Activated CD8-positive, alpha-beta T cell treated with anti-CD3 and anti-CD28 coated beads for 36 hours (primary cell): ENCODE measurements at regions of chr19 and their contacts with region 1.

Region 1: DNA sequence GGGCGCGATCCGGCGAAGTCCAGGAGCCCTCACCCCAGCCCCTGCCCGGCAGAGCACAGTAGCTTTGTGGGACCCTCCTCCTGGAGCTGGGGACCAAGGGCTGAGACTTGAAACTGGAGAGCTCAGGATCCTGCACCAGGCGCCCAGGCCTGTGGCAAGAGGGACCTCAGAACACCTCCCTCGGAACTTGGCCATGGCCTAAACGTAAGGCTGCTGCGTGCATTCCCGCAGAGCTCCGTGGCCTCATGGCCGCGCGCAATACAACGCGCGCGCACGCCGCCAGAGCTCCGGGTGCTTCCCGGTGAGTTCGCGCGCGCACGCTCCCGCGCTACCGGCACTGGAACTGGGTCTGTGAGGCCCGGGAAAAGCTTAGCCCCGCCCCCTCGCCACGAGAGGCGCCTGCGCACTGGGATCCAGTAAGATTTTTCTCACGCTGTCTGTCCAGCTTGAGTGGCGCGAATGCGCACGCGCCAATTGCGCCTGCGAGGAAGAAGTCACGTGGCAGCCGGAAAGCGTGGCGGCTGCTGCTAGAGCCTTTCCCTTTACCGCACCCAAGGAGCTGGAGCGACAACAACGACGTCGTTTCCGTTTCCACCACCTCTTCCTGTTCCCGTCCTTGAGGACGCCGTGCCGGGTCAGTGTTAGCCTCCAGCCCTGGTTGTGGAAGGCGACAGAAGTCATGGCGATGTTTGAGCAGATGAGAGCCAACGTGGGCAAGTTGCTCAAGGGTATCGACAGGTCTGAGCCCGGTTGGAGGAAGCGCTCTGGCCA is at the start of gene EIF3K:
- DNase-seq: peak; percentile 99
- ATAC-seq: peak; percentile 74
- H3K4me3 Mint-ChIP-seq: peak within 1 kb of the TSS; percentile 99
- H3K27ac Mint-ChIP-seq: peak within 1 kb of the TSS; percentile 99
- H3K4me1 Mint-ChIP-seq: peaks cover 44% of the 10 kb centered on the region
- H3K27me3 Mint-ChIP-seq: no peaks in the 10 kb centered on the region
- CTCF ChIP-seq: no peak
- total RNA-seq, gene EIF3K: 306 to 308 TPM

Region 2: GRCh38 chr19:38544034-38544958 is 74.5 kb before region 1 on chr19:
- CTCF ChIA-PET with region 1: interaction called, 15 read pairs
- POLR2A ChIA-PET with region 1: no interaction called
- intact Hi-C with region 1: loop called (anchors 5 kb)
- DNase-seq: peak; percentile 50
- ATAC-seq: peak; percentile 92
- H3K4me3 Mint-ChIP-seq: no peak overlapping the region
- H3K27ac Mint-ChIP-seq: no peak overlapping the region
- H3K4me1 Mint-ChIP-seq: peaks cover 20% of the 10 kb centered on the region
- H3K27me3 Mint-ChIP-seq: no peaks in the 10 kb centered on the region
- CTCF ChIP-seq: peak; percentile 68

Region 3: DNA sequence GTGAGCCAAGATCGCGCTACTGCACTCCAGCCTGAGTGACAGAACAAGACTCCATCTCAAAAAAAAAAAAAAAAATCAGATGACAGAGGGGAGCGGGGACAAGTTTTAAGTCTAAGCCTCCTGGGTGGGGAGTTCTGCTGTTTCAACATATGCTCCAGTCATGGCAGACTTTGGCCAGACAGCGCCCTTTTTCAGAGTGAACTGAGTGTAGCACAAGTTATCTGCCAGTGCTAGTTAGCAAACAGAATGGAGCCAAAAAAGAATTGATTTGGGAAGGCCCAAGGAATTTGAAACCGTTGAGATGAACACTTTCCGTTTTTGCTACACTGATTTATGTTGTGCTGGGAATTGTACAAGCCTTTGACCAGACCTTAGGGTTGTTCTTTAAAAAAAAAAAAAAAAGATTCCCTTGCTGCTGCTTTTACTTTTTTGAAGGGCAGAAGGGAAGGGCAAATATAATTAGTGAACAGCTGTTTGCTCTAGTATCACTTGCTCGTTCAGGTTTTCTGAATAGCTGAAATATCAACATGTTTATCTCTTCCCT is 34.3 kb after region 1 on chr19:
- CTCF ChIA-PET with region 1: no interaction called
- POLR2A ChIA-PET with region 1: no interaction called
- intact Hi-C with region 1: no loop called
- DNase-seq: no peak
- ATAC-seq: no peak
- H3K4me3 Mint-ChIP-seq: no peak overlapping the region
- H3K27ac Mint-ChIP-seq: no peak overlapping the region
- H3K4me1 Mint-ChIP-seq: peaks cover 85% of the 10 kb centered on the region
- H3K27me3 Mint-ChIP-seq: peaks cover 11% of the 10 kb centered on the region
- CTCF ChIP-seq: no peak

Region 4: DNA sequence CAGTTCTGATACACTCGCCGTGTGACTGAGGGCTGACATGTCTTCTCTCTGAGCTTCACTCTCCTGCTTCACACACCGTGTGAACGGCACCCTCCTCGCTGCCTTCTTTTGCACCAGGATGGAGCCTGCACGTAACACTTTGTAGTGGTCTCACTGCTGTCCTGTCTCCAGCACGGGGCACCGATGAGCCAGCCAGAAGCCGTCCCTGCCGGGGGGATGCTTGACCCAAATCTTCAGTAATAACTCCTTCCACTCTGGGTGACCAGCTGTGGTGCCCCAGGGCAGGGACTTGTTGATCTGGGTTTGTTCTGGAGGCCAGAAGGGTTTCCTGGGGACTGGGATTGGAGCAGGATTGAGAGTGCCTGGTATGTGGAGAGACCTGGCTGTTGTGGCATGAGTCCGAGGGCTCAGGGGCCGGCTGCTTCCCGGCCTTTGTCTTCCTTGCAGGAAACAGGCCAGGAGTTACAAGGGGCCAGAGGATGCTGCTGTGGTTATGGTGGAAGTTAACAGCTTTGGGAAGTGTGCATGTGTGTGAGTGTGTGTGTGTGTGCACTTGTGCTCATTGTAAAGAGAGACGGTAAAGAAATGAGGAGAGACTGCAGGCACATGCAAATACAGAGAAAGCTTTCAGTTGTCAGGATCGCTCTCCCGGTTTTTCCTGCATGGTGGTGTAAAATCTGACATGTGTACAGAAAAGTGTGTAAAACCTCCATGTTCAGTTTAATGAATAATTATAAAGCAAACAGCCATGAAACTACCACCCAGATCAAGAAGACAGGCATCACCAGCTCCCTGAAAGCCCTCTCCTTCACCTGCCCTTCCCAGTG is 525.7 kb after region 1 on chr19:
- CTCF ChIA-PET with region 1: no interaction called
- POLR2A ChIA-PET with region 1: no interaction called
- intact Hi-C with region 1: no loop called
- DNase-seq: no peak
- ATAC-seq: no peak
- H3K4me3 Mint-ChIP-seq: no peak overlapping the region
- H3K27ac Mint-ChIP-seq: no peak overlapping the region
- H3K4me1 Mint-ChIP-seq: peaks cover 10% of the 10 kb centered on the region
- H3K27me3 Mint-ChIP-seq: no peaks in the 10 kb centered on the region
- CTCF ChIP-seq: no peak